CD14-positive monocyte (primary cell): ENCODE measurements at regions of chr2 and their contacts with region 1.

Region 1: DNA sequence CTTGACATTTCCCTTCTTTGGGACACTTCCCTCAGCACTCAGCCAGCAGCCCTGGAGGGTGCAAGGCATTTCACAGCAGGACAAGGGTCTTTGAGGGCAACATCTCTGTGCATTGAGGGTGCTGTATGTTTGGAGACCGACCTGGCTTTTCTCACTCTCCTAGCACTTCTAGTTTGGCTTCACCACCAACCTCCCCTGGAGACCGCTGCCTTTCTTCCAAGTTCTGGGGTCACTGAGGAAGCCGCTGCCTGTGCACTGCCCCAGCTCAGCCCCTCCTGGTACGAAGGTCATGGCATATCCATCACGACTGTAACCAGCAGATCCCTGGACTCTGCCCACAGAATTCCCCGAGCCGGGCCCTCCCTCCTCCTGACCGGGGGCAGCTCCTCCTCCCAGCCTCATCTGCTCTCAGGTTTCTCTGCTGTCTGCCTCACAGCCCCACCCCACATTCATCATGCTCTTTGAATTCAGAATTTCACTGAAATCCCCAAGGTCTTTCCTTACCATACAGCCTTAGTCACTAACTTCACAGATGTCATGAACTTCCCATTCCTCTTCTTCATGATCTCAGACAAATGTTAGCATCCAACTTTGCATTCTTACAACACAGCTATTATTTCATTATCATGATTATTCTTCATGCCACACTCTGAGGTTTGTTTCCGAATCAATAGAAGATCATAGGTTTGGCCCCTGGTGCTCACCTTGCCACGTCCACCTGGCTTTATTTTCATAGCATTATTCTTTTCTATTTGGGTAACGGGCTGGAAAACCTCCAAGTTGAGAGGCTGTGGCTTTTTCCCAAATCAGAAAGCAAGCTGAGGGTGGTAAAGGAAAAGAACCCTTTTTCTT is 113.0 kb upstream of the COPS8 start:
- DNase-seq: peak; percentile 35 to 86 (median 56)
- H3K4me3 ChIP-seq: no peak overlapping the region
- H3K4me3 Mint-ChIP-seq: peak overlapping the region; percentile 20 to 23
- H3K27ac ChIP-seq: peak overlapping the region; percentile 35 to 52
- H3K27ac Mint-ChIP-seq: peak overlapping the region; percentile 30 to 93 (median 92)
- H3K4me1 ChIP-seq: peaks cover 75 to 82% of the 10 kb centered on the region in 2 donors
- H3K4me1 Mint-ChIP-seq: peaks cover 88% of the 10 kb centered on the region
- H3K27me3 ChIP-seq: no peaks in the 10 kb centered on the region
- H3K27me3 Mint-ChIP-seq: peaks cover 10 to 17% (median 17%) of the 10 kb centered on the region in 3 donors
- CTCF ChIP-seq: no peak

Region 2: GRCh38 chr2:236852100-236852978 is 120.4 kb before region 1 on chr2:
- intact Hi-C with region 1: no loop called
- DNase-seq: no peak
- H3K4me3 ChIP-seq: no peak overlapping the region
- H3K4me3 Mint-ChIP-seq: no peak overlapping the region
- H3K27ac ChIP-seq: no peak overlapping the region
- H3K27ac Mint-ChIP-seq: peak overlapping the region in 1 of 7 donors; percentile 51
- H3K4me1 ChIP-seq: no peaks in the 10 kb centered on the region
- H3K4me1 Mint-ChIP-seq: peaks cover 3% of the 10 kb centered on the region
- H3K27me3 ChIP-seq: peaks cover 4 to 10% of the 10 kb centered on the region in 2 donors
- H3K27me3 Mint-ChIP-seq: peaks cover 21 to 39% (median 28%) of the 10 kb centered on the region in 3 donors
- CTCF ChIP-seq: no peak

Region 3: DNA sequence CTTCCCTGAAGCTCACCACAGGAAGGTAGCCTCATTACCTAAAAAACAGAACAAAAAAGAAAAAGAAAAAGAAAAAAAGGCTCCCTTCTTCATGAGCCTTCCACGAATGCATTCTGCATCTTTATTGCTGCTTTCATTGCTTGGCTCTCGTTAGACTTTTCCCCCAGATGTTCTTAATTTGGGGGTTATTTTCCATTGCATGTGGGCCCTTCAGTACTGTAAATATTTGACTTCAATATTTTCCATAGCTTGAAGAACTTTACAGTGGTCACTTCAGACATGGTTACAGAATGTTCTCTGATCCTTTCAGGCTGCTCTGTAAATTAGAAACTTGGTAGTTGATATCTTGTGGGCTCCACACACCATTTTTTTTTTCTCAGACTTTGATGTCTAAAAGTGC is 47.4 kb after region 1 on chr2:
- intact Hi-C with region 1: loop called in 1 of 2 experiments (anchors 5 kb)
- DNase-seq: no peak
- H3K4me3 ChIP-seq: no peak overlapping the region
- H3K4me3 Mint-ChIP-seq: no peak overlapping the region
- H3K27ac ChIP-seq: no peak overlapping the region
- H3K27ac Mint-ChIP-seq: peak overlapping the region in 1 of 7 donors; percentile 16
- H3K4me1 ChIP-seq: no peaks in the 10 kb centered on the region
- H3K4me1 Mint-ChIP-seq: peaks cover 11% of the 10 kb centered on the region
- H3K27me3 ChIP-seq: no peaks in the 10 kb centered on the region
- H3K27me3 Mint-ChIP-seq: peaks cover 12 to 17% (median 16%) of the 10 kb centered on the region in 3 donors
- CTCF ChIP-seq: no peak

Region 4: DNA sequence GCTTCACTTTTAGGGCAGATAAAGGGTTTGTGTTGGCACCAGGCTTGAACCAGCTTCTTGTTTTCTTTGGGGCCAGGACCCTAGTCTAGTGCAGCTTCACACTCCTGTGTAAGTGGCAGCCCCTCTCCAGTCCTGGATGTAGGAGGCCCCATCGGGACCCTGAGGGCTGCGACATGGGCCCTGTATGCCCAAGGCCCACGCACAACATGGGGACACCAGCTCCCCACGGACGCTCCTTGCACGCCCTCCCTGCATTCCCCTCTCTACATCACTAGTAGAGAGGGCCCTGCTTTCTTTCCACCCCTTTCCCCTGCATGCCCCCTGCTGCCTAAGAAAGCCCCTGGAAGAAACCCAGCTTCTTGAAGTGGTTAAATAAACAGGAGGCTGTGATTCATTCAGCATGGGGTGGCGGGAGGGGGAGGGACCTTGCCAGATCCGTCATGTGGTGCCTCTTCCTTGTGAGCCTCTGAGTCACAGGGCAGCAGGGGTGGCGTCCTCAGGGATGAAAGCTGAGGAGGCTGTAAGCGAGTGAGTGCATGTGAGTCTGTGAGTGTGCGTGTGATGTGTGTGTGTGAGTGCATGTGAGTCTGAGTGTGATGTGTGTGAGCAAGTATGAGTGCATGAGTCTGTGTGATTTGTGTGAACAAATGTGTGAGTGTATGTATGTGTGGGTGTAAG is 155.4 kb after region 1 on chr2:
- intact Hi-C with region 1: no loop called
- DNase-seq: peak in 1 of 3 donors; percentile 49
- H3K4me3 ChIP-seq: no peak overlapping the region
- H3K4me3 Mint-ChIP-seq: no peak overlapping the region
- H3K27ac ChIP-seq: no peak overlapping the region
- H3K27ac Mint-ChIP-seq: no peak overlapping the region
- H3K4me1 ChIP-seq: no peaks in the 10 kb centered on the region
- H3K4me1 Mint-ChIP-seq: no peaks in the 10 kb centered on the region
- H3K27me3 ChIP-seq: no peaks in the 10 kb centered on the region
- H3K27me3 Mint-ChIP-seq: peaks cover 0 to 3% (median 0%) of the 10 kb centered on the region in 3 donors
- CTCF ChIP-seq: no peak